ENCODE measurements at regions of chr1 and their contacts with region 1.

Region 1: GRCh38 chr1:1033009-1033587 is 13.2 kb downstream of the AGRN start:
- DNase-seq: peak; percentile 52 to 94 (median 88)
- H3K4me3 ChIP-seq: peak overlapping the region; percentile 21 to 73 (median 57)
- H3K27ac ChIP-seq: peak overlapping the region in 52 of 59 donors; percentile 21 to 89 (median 79)
- H3K27me3 ChIP-seq: no peaks in the 10 kb centered on the region
- CTCF ChIP-seq: peak; percentile 47 to 91 (median 83)

Region 2: GRCh38 chr1:1059494-1060280 is 26.6 kb after region 1 on chr1:
- intact Hi-C with region 1: loop called in 1 of 2 experiments (anchors 2 kb)
- DNase-seq: peak; percentile 46 to 88 (median 81)
- H3K4me3 ChIP-seq: peak overlapping the region; percentile 37 to 75 (median 61)
- H3K27ac ChIP-seq: no peak overlapping the region
- H3K27me3 ChIP-seq: peaks cover 0 to 50% (median 9%) of the 10 kb centered on the region in 45 donors
- CTCF ChIP-seq: peak in 12 of 56 donors; percentile 1 to 62 (median 26)

Region 3: GRCh38 chr1:1109743-1110142 is 76.6 kb after region 1 on chr1:
- intact Hi-C with region 1: loop called in 1 of 2 experiments (anchors 5 kb)
- DNase-seq: peak in 2 of 10 donors; percentile 32 to 37
- H3K4me3 ChIP-seq: no peak overlapping the region
- H3K27ac ChIP-seq: no peak overlapping the region
- H3K27me3 ChIP-seq: no peaks in the 10 kb centered on the region
- CTCF ChIP-seq: no peak

Region 4: DNA sequence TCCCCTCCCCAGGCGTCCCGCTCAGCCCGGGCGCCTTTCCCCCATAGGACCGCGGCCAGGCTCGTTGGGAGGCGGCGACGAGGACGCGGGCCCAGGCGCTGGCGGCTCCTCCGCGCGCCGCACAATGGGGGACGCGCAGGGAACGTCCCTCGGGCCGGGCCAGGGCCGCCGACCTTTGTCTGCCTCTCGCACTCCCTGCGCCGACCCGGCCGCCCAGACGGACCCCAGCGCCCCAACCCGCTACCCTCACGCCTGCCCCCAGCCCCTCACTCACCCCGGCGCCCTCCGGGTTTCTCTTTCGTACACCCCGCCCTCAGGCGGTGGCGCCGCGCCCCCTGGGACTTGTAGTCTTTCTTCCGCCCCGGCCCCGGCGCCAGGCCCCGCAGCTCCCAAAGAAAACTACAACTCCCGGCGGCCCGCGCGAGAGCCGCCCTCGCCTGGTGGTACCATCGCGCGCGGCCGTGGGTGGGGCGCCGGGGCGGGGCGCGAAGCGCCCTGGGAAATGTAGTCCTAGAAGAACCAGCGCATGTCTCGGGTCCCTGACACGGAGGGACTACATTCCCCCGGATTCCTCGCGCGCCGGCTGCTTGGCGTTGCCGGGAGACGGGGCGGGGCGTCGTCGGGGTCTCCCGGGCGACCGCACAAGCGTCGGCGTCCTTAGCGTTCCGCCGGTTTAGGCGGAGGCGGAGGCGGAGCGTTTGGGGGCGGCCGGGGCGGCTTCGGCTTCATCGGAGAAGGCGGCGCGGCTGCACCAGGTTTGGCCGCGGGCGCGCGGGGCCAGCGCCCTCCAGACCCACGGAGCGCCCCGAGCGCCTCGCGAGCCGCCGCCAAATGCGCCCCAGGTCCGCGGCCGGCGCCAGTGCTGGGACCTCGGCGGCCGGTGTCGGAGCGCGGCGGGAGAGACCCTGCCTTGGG is 82.9 kb after region 1 on chr1 and contains the start of gene C1orf159:
- intact Hi-C with region 1: loop called (anchors 5 kb)
- DNase-seq: peak; percentile 98 to 100 (median 99)
- H3K4me3 ChIP-seq: peak within 1 kb of the TSS; percentile 60 to 98 (median 87)
- H3K27ac ChIP-seq: peak within 1 kb of the TSS in 55 of 59 donors; percentile 27 to 93 (median 81)
- H3K27me3 ChIP-seq: no peaks in the 10 kb centered on the region
- CTCF ChIP-seq: peak in 38 of 56 donors; percentile 8 to 61 (median 34)
- total RNA-seq, gene C1orf159: 14.3 to 35.0 (median 23.4) TPM

Region 5: DNA sequence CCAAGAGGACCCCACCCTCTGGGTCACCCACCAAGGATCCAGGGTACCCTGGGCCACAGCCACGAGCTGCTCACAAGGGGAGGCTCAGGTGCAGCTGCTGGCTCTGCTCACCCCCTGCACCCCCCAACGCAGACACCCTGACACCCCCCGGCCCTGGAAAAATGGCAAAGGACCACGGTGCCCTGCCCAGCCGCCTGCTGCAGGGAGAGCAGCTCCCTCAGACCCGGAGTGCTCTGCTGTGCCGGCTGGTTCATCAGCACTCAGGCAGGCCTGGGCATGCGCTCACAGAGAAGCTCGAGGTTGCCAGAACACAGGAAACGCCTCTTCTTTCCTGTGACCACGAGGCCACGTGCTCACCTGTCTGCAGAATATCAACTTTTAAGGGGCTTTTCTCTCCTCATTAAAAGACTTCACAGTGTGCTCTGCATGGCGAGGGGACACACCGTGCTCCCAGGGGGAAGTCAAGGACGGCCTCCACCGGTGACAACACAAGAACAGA is 217.7 kb after region 1 on chr1:
- intact Hi-C with region 1: loop called in 1 of 2 experiments (anchors 5 kb)
- DNase-seq: no peak
- H3K4me3 ChIP-seq: no peak overlapping the region
- H3K27ac ChIP-seq: no peak overlapping the region
- H3K27me3 ChIP-seq: peaks cover 0 to 26% (median 13%) of the 10 kb centered on the region in 45 donors
- CTCF ChIP-seq: no peak

Region 6: GRCh38 chr1:1307908-1308755 is 275.0 kb after region 1 on chr1 and contains the starts of genes ACAP3 and PUSL1:
- intact Hi-C with region 1: loop called in 1 of 2 experiments (anchors 5 kb)
- DNase-seq: peak; percentile 69 to 90 (median 86)
- H3K4me3 ChIP-seq: peak within 1 kb of the TSS; percentile 65 to 97 (median 89)
- H3K27ac ChIP-seq: peak within 1 kb of the TSS; percentile 86 to 100 (median 99)
- H3K27me3 ChIP-seq: no peaks in the 10 kb centered on the region
- CTCF ChIP-seq: peak in 34 of 56 donors; percentile 9 to 55 (median 34)
- total RNA-seq, gene ACAP3: 92.3 to 273 (median 164) TPM
- total RNA-seq, gene PUSL1: 9.1 to 22.8 (median 14.0) TPM

Measured in dorsolateral prefrontal cortex (tissue), 120 donors.